Aorta (tissue), 5 donors: ENCODE measurements at regions of chr15 and their contacts with region 1.

Region 1: GRCh38 chr15:55221090-55222011 is 24.6 kb upstream of the RSL24D1 start:
- DNase-seq: no peak
- ATAC-seq: peak; percentile 78
- H3K4me3 ChIP-seq: no peak overlapping the region
- H3K27ac ChIP-seq: peak overlapping the region; percentile 61 to 78
- H3K4me1 ChIP-seq: no peaks in the 10 kb centered on the region
- H3K27me3 ChIP-seq: no peaks in the 10 kb centered on the region

Region 2: GRCh38 chr15:55183679-55184078 is 37.7 kb before region 1 on chr15:
- intact Hi-C with region 1: no loop called
- DNase-seq: no peak
- ATAC-seq: no peak
- H3K4me3 ChIP-seq: no peak overlapping the region
- H3K27ac ChIP-seq: no peak overlapping the region
- H3K4me1 ChIP-seq: peaks cover 0 to 3% of the 10 kb centered on the region in 2 donors
- H3K27me3 ChIP-seq: no peaks in the 10 kb centered on the region

Region 3: DNA sequence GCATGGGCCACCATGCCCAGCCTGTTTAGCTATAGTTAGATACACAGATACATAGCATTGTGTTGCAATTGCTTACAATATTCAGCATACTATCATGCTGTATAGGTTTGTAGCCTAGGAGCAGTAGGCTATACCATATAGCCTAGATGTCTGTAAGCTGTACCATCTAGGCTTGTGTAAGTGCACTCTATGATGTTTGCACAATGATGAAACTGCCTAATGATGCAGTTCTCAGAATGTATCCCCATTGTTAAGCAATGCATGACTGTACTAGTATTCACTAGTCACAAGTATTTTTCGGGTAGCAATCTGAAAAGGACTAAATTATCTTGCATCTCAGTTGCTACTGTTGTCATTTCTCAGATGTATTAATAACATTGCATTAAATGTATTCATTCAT is 113.6 kb after region 1 on chr15:
- intact Hi-C with region 1: no loop called
- DNase-seq: no peak
- ATAC-seq: no peak
- H3K4me3 ChIP-seq: no peak overlapping the region
- H3K27ac ChIP-seq: no peak overlapping the region
- H3K4me1 ChIP-seq: no peaks in the 10 kb centered on the region
- H3K27me3 ChIP-seq: no peaks in the 10 kb centered on the region

Region 4: DNA sequence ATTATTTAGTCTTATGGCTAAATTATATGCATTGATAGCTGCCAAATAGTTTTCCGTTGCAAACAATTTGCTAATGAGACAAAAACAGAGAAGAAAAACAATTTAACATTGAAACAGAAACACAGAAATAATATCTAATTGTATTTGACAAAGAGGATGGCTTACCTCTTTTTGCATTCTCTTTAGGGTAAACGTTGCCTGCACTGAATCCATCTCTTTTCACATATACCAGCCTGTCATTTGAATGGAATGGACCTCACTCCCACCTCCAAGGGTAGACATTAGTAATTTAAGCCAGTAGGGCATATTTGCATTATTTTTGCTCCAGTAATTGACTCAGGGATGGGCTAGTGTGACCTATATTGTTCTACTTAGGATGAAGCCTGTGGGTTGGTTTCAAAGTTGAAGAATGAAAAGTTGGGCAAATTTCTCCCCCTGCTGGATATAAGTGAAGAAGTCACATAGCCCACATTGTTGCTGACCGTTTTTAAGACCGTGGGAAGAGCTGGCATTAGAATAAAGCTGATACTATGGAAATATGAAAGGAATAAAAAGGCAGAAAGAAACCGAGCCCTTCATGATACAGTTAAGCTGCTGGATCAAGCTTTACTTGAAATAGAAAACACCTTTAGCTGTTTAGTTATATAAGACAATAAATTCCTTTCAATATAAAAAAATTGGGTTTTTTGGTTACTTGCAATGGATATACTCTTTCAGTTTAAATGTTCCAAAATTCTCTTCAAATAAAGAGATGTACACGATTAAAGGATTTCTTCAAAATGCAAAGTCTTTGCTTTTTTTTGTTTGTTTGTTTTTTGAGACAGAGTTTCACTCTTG is 213.9 kb after region 1 on chr15:
- intact Hi-C with region 1: loop called in 1 of 2 experiments (anchors 5 kb)
- DNase-seq: no peak
- ATAC-seq: peak; percentile 63
- H3K4me3 ChIP-seq: no peak overlapping the region
- H3K27ac ChIP-seq: no peak overlapping the region
- H3K4me1 ChIP-seq: no peaks in the 10 kb centered on the region
- H3K27me3 ChIP-seq: no peaks in the 10 kb centered on the region